Dorsolateral prefrontal cortex (tissue), 120 donors: ENCODE measurements at regions of chr2 and their contacts with region 1.

Region 1: DNA sequence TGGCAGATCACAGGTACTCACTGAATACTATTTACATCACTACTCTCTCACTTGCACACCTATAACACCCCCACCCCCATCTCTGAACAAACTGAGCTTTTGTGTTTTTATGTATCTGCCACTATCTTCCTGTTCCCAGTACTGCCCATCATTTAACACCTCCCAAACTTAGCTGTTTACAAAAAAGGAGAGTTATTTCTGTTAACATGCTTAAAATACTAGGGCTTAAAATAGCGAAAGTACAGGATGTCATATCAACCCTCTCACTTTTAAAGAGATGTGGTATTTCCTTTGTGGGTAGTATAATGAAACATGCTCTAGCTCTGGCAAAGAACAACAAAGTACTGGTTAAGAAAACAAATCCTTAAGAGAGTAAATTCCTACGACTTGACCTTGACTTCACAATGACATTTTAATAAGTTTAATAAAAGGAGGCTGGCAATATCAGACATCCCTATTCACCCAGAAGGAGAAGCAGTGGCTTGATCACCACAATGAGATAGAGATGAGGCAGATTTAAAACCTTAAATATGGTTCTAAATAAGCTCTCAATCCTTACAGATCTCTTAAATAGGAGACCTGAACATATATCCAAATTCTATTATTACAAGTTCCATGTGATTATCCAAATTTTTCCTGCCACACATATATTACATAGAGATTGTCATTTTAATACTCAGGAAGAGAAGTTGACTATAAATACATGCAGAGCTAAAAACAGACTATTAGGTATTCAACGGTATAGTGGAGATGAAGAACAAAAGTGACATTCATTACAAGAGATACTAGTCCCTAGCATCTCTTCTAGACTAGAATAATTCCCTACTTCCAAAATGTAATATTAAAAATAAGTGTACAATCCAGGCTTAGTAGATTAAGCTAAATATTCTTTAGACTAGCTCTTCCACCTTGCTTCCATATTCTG is 36.9 kb downstream of the TRAK2 start:
- DNase-seq: no peak
- H3K4me3 ChIP-seq: peak overlapping the region in 8 of 59 donors; percentile 0 to 17 (median 10)
- H3K27ac ChIP-seq: peak overlapping the region in 31 of 59 donors; percentile 1 to 76 (median 48)
- H3K27me3 ChIP-seq: no peaks in the 10 kb centered on the region
- CTCF ChIP-seq: no peak

Region 2: DNA sequence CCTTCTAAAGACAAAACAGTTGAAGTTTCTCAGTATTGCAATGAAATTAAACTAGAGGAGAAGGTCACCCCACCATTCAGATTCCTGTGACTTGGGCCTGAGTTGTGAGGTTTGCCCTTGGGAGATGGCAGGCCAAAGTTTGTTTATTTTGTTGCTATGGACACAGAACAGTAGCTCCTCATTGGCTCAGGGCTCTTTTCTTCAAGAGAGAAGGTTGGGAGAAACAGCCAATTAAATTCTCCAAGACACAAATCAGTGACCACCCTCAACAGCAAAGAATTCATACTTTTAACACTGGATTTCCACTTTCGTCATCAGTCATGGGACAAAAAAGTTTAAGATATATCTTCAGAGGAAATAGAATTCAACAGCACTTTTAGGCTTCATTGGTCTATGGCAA is 57.1 kb before region 1 on chr2 and contains the start of gene FLACC1:
- intact Hi-C with region 1: no loop called
- DNase-seq: no peak
- H3K4me3 ChIP-seq: peak within 1 kb of the TSS in 6 of 59 donors; percentile 2 to 23 (median 12)
- H3K27ac ChIP-seq: peak within 1 kb of the TSS in 2 of 59 donors; percentile 2 to 41
- H3K27me3 ChIP-seq: no peaks in the 10 kb centered on the region
- CTCF ChIP-seq: no peak
- total RNA-seq, gene FLACC1: 2.9 to 22.0 (median 10.8) TPM

Region 3: GRCh38 chr2:201466050-201466675 is 51.8 kb after region 1 on chr2:
- intact Hi-C with region 1: loop called in 1 of 2 experiments (anchors 5 kb)
- DNase-seq: no peak
- H3K4me3 ChIP-seq: peak overlapping the region in 1 of 59 donors; percentile 6
- H3K27ac ChIP-seq: peak overlapping the region; percentile 63 to 96 (median 90)
- H3K27me3 ChIP-seq: no peaks in the 10 kb centered on the region
- CTCF ChIP-seq: peak in 2 of 56 donors; percentile 4 to 8